ENCODE measurements at regions of chr1 and their contacts with region 1.

Region 1: DNA sequence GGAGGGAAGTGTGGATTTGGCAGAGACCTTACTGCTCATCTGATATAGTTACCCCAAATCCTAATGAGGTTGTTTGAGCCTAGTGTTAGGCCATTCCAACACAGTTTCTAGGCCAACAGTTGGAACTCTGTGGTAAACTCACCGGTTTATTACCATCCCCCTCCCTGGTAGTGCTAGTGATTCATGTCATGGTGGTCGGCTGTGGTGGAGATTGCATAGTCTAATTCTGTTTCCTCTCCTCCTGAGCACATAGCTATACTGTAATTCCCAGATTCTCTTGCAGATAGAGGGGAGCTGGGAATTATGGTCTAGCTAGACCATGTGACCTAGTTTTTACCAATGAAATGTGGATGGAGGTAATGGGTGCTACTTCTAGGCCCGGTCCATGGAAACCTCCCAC is 123.7 kb upstream of the KIF26B start:
- DNase-seq: no peak
- H3K4me3 ChIP-seq: no peak overlapping the region
- H3K27ac ChIP-seq: no peak overlapping the region
- H3K4me1 ChIP-seq: no peaks in the 10 kb centered on the region
- H3K27me3 ChIP-seq: no peaks in the 10 kb centered on the region
- CTCF ChIP-seq: no peak
- POLR2A ChIP-seq: no peak

Region 2: DNA sequence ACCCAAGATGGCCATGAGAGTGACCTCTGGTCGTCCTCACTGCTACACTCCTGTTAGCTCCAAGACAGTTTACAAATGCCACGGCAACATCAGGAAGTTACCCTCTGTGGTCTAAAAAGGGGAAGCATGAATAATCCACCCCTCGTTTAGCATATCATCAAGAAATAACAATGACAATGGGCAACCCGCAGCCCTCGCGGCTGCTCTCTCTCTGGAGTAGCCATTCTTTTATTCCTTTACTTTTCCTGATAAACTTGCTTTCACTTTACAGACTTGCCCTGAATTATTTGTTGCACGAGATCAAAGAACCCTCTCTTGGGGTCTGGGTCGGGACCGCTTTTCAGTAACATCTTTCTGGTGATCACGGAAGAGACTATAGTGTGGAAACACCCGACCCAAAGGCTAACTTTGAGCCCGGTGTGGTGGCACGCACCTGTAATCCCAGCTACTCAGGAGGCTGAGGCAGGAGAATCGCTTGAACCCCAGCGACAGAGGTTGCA is 215.4 kb before region 1 on chr1:
- intact Hi-C with region 1: loop called (anchors 10 kb)
- DNase-seq: no peak
- H3K4me3 ChIP-seq: no peak overlapping the region
- H3K27ac ChIP-seq: no peak overlapping the region
- H3K4me1 ChIP-seq: no peaks in the 10 kb centered on the region
- H3K27me3 ChIP-seq: no peaks in the 10 kb centered on the region
- CTCF ChIP-seq: no peak
- POLR2A ChIP-seq: no peak

Region 3: GRCh38 chr1:244901400-244902015 is 129.5 kb before region 1 on chr1:
- intact Hi-C with region 1: no loop called
- DNase-seq: no peak
- H3K4me3 ChIP-seq: no peak overlapping the region
- H3K27ac ChIP-seq: no peak overlapping the region
- H3K4me1 ChIP-seq: no peaks in the 10 kb centered on the region
- H3K27me3 ChIP-seq: no peaks in the 10 kb centered on the region
- CTCF ChIP-seq: no peak
- POLR2A ChIP-seq: no peak

Region 4: DNA sequence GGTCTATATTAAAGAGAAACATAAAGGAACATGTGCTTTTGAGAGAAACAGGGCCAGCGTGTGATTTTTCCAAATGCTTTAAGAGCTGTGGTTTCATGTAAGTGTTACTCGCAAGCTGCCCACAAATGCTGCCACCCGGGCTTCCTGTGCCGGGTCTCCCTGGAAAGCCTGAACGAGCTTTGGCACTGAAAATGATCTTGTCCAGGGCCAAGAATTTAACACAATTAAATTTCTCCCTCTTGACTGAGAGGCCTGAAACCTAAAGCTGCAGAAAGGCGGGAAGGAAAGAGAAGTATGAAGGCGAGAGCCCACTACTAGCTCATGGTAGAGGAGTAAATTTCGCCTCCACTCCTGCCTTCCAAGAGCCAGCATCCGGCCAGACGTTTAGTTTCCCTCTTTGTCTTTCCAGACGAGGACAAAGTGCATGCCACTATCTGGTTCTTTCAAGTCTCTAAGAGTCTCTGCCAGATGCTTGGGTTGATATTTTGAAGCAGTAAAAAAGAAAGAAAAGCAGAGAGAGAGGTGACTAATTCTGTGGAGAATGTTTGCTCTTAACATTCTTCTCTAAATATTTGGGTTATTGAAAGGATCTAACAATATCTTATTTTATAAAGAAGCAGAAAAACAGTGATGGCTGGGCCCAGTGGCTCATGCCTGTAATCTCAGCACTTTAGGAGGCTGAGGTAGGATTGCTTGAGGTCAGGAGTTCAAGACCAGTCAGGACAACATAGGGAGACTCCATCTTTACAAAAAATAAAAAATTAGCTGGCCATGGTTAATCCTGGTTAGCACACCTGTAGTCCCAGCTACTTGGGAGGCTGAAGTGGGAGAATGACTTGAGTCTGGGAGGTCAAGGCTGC is 66.7 kb before region 1 on chr1:
- intact Hi-C with region 1: no loop called
- DNase-seq: no peak
- H3K4me3 ChIP-seq: no peak overlapping the region
- H3K27ac ChIP-seq: peak overlapping the region; percentile 54 to 68
- H3K4me1 ChIP-seq: peaks cover 5 to 6% of the 10 kb centered on the region in 2 donors
- H3K27me3 ChIP-seq: no peaks in the 10 kb centered on the region
- CTCF ChIP-seq: no peak
- POLR2A ChIP-seq: no peak

Measured in uterus (tissue), 4 donors.